ENCODE measurements at regions of chr3 and their contacts with region 1.

Region 1: DNA sequence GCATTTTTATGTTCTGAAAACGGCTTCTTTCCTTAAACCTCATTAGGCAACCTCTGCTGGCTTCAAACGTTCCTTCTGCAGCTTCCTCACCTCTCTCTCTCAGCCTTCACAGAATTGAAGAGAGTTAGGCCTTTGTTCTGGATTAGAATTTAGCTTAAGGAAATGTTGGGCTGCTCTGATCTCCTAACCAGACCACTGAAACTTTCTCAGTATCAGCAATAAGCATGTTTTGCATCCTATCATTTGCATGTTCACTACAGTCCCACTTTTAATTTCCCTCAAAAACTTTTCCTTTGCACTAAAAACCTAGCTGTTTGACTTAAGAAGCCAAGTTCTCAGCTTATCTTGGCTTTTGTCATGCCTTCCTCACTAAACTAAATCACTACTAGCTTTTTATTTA is 49.5 kb downstream of the SMARCC1 start:
- DNase-seq: no peak

Region 2: GRCh38 chr3:46913644-46914043 is 818.5 kb before region 1 on chr3:
- CTCF ChIA-PET with region 1: interaction called, 10 read pairs
- POLR2A ChIA-PET with region 1: no interaction called
- DNase-seq: no peak